ENCODE measurements at regions of chr11 and their contacts with region 1.

Region 1: GRCh38 chr11:6603287-6604080 is at the starts of genes ILK and RRP8:
- DNase-seq: peak; percentile 90 to 93
- H3K4me3 ChIP-seq: peak within 1 kb of the TSS; percentile 60
- H3K4me3 Mint-ChIP-seq: no peak within 1 kb of the TSS
- H3K27ac Mint-ChIP-seq: no peak within 1 kb of the TSS
- H3K4me1 ChIP-seq: peaks cover 38% of the 10 kb centered on the region
- H3K4me1 Mint-ChIP-seq: peaks cover 17% of the 10 kb centered on the region
- H3K27me3 ChIP-seq: no peaks in the 10 kb centered on the region
- H3K27me3 Mint-ChIP-seq: no peaks in the 10 kb centered on the region
- CTCF ChIP-seq: peak in 1 of 2 experiments; percentile 12
- total RNA-seq, gene ILK: 117 and 119 TPM in 2 replicates
- total RNA-seq, gene RRP8: 20.0 and 21.0 TPM in 2 replicates

Region 2: GRCh38 chr11:6431861-6432260 is 171.6 kb before region 1 on chr11:
- CTCF ChIA-PET with region 1: no interaction called
- POLR2A ChIA-PET with region 1: no interaction called
- intact Hi-C with region 1: no loop called
- DNase-seq: no peak
- H3K4me3 ChIP-seq: no peak overlapping the region
- H3K4me3 Mint-ChIP-seq: no peak overlapping the region
- H3K27ac Mint-ChIP-seq: no peak overlapping the region
- H3K4me1 ChIP-seq: peaks cover 20% of the 10 kb centered on the region
- H3K4me1 Mint-ChIP-seq: peaks cover 31% of the 10 kb centered on the region
- H3K27me3 ChIP-seq: no peaks in the 10 kb centered on the region
- H3K27me3 Mint-ChIP-seq: no peaks in the 10 kb centered on the region
- CTCF ChIP-seq: no peak

Region 3: DNA sequence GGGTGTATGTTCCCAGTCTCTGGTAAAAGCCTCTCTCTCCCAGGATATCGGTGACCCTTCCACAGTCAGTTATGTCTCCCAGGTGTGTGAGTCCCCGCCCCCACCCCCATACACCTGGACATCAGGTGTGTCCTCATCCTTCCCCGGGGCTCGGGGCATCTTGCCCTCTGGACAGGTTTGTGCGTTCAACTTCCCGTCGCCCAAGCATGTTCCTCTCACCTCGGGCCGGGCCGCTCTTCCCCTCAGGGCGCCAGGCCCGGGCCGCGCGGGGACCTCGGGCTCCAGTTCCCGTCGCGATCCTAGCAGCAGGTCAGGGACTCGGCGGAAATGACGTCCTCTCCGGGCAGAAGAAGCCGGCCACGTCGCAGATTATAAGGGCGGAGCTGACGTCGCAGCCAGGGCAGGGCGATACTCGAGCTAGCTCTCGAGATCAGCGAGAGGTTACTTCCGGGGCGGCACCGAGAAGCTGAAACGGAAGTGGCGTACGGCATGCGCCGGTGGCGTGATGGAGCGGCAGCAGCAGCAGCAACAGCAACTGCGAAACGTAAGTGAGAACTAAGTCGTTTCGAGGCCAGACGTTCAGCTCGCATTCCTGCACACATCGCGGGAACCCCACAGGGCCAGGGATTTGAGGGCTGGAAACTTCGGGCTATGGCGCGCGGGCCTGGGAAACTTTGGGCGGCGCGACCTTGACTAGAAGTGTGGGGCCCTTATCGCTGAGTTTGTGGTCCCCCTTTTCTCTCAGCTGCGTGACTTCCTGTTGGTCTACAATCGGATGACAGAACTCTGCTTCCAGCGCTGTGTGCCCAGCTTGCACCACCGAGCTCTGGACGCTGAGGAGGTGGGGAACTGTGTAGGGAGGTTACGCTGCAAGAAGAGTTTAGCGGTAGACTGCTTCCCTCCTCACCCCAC is 122.2 kb before region 1 on chr11 and contains the starts of genes ARFIP2 and TIMM10B:
- CTCF ChIA-PET with region 1: no interaction called
- POLR2A ChIA-PET with region 1: interaction called, 10 read pairs
- intact Hi-C with region 1: loop called (anchors 2 kb)
- DNase-seq: peak; percentile 97 to 98
- H3K4me3 ChIP-seq: peak within 1 kb of the TSS; percentile 88
- H3K4me3 Mint-ChIP-seq: peak within 1 kb of the TSS; percentile 97
- H3K27ac Mint-ChIP-seq: peak within 1 kb of the TSS; percentile 99
- H3K4me1 ChIP-seq: peaks cover 42% of the 10 kb centered on the region
- H3K4me1 Mint-ChIP-seq: peaks cover 23% of the 10 kb centered on the region
- H3K27me3 ChIP-seq: no peaks in the 10 kb centered on the region
- H3K27me3 Mint-ChIP-seq: no peaks in the 10 kb centered on the region
- CTCF ChIP-seq: no peak
- total RNA-seq, gene ARFIP2: 94.6 and 100 TPM in 2 replicates
- total RNA-seq, gene TIMM10B: 52.4 and 53.1 TPM in 2 replicates

Region 4: DNA sequence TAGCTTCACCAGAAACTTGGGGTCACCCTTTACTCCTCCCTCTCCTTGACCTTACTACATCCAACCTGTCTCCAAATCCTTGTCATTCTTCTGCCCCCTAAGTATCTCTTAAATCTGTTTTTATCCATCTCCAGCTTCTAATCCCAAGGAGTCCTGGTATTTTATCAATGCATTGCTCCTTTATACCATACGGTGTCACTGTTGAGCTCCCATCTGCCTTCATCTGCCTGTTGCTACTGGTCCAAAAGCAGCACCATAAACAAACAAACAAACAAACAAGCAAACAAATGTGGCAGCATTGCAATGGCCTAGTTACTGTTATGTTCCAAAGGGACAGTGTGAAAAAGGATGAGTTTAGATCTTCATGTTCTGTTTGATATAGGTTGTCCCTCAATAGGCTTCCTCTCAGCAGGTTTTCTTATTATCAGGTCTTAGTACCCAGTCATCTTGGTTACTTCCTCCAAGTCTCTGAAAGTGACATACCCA is 72.2 kb before region 1 on chr11:
- CTCF ChIA-PET with region 1: interaction called, 9 read pairs
- POLR2A ChIA-PET with region 1: no interaction called
- intact Hi-C with region 1: loop called (anchors 1 kb)
- DNase-seq: peak in 1 of 2 experiments; percentile 55
- H3K4me3 ChIP-seq: no peak overlapping the region
- H3K4me3 Mint-ChIP-seq: no peak overlapping the region
- H3K27ac Mint-ChIP-seq: no peak overlapping the region
- H3K4me1 ChIP-seq: peaks cover 4% of the 10 kb centered on the region; the same call in 1 of the 2 replicates
- H3K4me1 Mint-ChIP-seq: peaks cover 6% of the 10 kb centered on the region
- H3K27me3 ChIP-seq: no peaks in the 10 kb centered on the region
- H3K27me3 Mint-ChIP-seq: no peaks in the 10 kb centered on the region
- CTCF ChIP-seq: peak; percentile 74 to 80

Region 5: GRCh38 chr11:6667733-6668374 is 64.4 kb after region 1 on chr11:
- CTCF ChIA-PET with region 1: interaction called, 4 read pairs
- POLR2A ChIA-PET with region 1: no interaction called
- intact Hi-C with region 1: loop called (anchors 1 kb)
- DNase-seq: peak in 1 of 2 experiments; percentile 45
- H3K4me3 ChIP-seq: no peak overlapping the region
- H3K4me3 Mint-ChIP-seq: no peak overlapping the region
- H3K27ac Mint-ChIP-seq: no peak overlapping the region
- H3K4me1 ChIP-seq: no peaks in the 10 kb centered on the region
- H3K4me1 Mint-ChIP-seq: no peaks in the 10 kb centered on the region
- H3K27me3 ChIP-seq: no peaks in the 10 kb centered on the region
- H3K27me3 Mint-ChIP-seq: peaks cover 15% of the 10 kb centered on the region
- CTCF ChIP-seq: peak; percentile 62 to 64

Measured in Caco-2 (cell line).